Panc1 (cell line): ENCODE measurements at regions of chr2 and their contacts with region 1.

Region 1: DNA sequence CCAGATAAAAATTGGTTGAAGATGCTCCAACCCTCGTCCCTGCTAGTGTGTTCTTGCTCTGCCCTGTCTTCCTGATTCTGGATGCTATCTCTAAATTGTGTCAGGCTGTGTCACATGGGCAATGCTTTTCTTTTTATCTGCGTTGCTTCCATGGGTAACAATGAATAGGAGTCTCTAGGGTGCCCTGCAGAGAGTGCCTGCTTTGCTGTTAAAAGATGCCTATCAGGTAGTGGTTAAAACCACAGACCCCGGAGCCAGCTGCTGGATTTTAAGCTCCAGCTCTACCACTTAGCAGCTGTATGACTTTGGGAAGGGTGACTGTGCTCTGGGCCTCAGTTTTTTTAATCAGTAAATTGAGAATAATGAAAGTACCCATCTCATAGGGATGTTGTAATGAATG is 340.3 kb downstream of the PLCL1 start:
- DNase-seq: no peak
- ATAC-seq: no peak
- H3K4me3 ChIP-seq: no peak overlapping the region
- H3K27ac ChIP-seq: no peak overlapping the region
- H3K4me1 ChIP-seq: no peaks in the 10 kb centered on the region
- H3K27me3 ChIP-seq: peaks cover 4% of the 10 kb centered on the region; the same call in 1 of the 2 replicates
- CTCF ChIP-seq: no peak

Region 2: DNA sequence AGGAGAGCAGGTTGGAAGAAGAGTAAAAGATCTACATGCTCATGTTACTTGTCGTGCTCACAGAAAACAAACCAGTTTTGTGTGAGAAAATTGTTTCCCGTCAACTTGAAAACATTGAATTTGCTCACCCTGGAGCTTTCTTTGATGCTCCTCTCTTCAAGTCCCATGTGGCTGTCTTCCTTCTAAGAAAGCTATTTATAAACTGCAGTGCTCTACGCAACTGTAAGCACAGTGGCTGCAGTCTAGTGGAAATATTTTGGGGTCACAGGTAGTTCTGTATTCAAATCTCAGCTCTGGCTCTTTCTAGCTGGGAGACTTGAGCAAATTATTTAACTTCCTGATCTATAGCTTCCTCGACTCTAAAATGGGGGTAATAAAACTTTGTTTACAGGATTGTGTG is 128.4 kb before region 1 on chr2:
- CTCF ChIA-PET with region 1: no interaction called
- POLR2A ChIA-PET with region 1: no interaction called
- in situ Hi-C with region 1: no loop called
- intact Hi-C with region 1: no loop called
- DNase-seq: no peak
- ATAC-seq: no peak
- H3K4me3 ChIP-seq: no peak overlapping the region
- H3K27ac ChIP-seq: no peak overlapping the region
- H3K4me1 ChIP-seq: no peaks in the 10 kb centered on the region
- H3K27me3 ChIP-seq: no peaks in the 10 kb centered on the region; the same call in 1 of the 2 replicates
- CTCF ChIP-seq: no peak

Region 3: GRCh38 chr2:198042189-198042588 is 102.5 kb before region 1 on chr2:
- CTCF ChIA-PET with region 1: no interaction called
- POLR2A ChIA-PET with region 1: no interaction called
- in situ Hi-C with region 1: no loop called
- intact Hi-C with region 1: no loop called
- DNase-seq: no peak
- ATAC-seq: no peak
- H3K4me3 ChIP-seq: no peak overlapping the region
- H3K27ac ChIP-seq: no peak overlapping the region
- H3K4me1 ChIP-seq: no peaks in the 10 kb centered on the region
- H3K27me3 ChIP-seq: no peaks in the 10 kb centered on the region; the same call in none of the 2 replicates
- CTCF ChIP-seq: no peak

Region 4: DNA sequence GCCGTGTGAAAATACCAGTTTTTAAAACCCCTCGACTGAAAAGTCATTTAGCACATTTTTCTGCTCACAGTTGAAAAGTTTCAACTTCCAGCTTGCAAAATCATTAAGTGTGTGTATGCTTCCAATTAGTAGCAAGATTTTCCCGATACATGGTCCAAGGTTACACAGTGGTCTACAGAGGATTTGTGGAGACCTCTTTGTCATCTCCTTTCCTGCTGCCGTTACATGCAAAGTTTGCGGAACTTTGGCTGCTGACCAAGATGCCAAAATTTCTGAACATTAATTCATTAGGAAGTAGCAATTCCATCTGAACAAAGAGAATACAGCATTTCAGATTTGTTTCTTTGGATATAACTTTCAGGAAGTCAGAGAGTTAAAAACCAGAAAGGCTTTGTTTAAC is 134.4 kb after region 1 on chr2:
- CTCF ChIA-PET with region 1: no interaction called
- POLR2A ChIA-PET with region 1: no interaction called
- in situ Hi-C with region 1: no loop called
- intact Hi-C with region 1: loop called (anchors 5 kb)
- DNase-seq: no peak
- ATAC-seq: no peak
- H3K4me3 ChIP-seq: no peak overlapping the region
- H3K27ac ChIP-seq: no peak overlapping the region
- H3K4me1 ChIP-seq: no peaks in the 10 kb centered on the region
- H3K27me3 ChIP-seq: peaks cover 8% of the 10 kb centered on the region
- CTCF ChIP-seq: no peak

Region 5: GRCh38 chr2:198424112-198424511 is 279.5 kb after region 1 on chr2:
- CTCF ChIA-PET with region 1: no interaction called
- POLR2A ChIA-PET with region 1: no interaction called
- in situ Hi-C with region 1: no loop called
- intact Hi-C with region 1: no loop called
- DNase-seq: no peak
- ATAC-seq: no peak
- H3K4me3 ChIP-seq: no peak overlapping the region
- H3K27ac ChIP-seq: no peak overlapping the region
- H3K4me1 ChIP-seq: no peaks in the 10 kb centered on the region
- H3K27me3 ChIP-seq: no peaks in the 10 kb centered on the region
- CTCF ChIP-seq: no peak